ENCODE measurements at regions of chr4 and their contacts with region 1.

Region 1: GRCh38 chr4:94595879-94596483 is 144.2 kb downstream of the PDLIM5 start:
- DNase-seq: peak; percentile 45
- CTCF ChIP-seq: peak; percentile 65

Region 2: DNA sequence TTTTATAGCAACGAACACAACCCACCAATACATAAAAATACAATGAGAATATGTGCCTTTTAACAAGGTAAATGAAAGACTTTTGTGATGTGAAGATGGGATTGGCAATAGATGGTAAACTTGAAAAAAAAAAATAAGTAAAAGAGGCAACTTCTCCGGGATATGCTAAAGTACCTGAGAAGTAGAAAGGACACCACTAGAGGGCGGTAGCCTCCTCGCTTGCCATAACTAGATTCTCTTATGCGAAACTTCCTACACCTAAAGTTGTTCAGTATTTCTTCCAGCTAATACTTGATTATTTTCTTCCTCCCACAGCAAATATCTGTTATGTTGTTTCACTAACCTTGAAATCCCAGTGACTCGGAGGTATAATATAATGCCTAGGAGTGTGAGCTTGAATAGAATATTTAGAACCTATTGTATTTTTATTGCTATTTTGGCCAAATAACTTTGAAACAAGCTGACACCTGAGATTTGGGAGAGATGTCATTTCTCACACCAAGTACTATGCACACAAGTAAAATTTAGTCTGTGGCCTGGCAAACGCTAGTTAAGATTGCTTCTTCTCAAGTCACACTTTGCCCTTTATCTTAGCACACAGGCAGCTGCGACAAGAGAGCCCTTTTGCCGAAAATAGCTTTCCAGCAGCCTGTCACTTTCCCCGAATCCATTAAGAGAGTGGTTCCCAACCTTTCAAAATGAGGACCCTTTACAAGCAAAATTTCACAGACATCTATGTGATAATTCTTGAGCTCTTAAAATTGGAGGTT is 189.1 kb before region 1 on chr4:
- in situ Hi-C with region 1: loop called (anchors 10 kb)
- DNase-seq: peak; percentile 28
- CTCF ChIP-seq: peak; percentile 78

Region 3: DNA sequence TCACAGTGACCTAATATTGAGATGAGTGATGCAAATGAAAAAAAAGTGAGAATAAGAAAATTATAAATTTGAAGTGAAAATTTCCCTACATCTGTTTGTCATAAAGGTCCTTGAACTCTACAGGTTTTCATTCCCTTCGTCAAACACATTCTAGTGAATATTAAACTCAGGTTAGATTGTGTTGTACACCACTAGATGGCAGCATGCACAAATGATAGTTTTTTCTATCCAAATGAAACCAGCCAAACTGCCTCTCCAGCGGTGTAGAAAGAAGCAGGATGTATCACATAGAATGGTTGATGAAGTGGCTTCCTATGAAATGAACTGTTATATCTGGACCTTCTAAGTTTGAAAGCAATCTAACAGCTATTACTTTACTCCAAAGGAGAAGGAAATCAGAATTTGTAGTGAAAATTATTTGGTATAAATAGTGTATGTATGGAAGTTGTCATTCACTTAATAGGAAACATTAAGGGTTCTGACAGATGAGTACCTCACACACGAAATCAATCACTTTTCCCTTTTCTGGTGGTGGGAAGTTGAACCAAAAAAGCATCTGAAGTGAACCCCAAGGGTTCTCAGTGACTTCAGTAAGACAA is 570.0 kb after region 1 on chr4:
- in situ Hi-C with region 1: no loop called
- DNase-seq: peak; percentile 54
- CTCF ChIP-seq: peak; percentile 66

Region 4: GRCh38 chr4:95898226-95898625 is 1302.2 kb after region 1 on chr4:
- in situ Hi-C with region 1: no loop called
- DNase-seq: no peak
- CTCF ChIP-seq: no peak